GM12878 (cell line): ENCODE measurements at regions of chr6 and their contacts with region 1.

Region 1: GRCh38 chr6:30672445-30673253 is at the start of gene DHX16:
- DNase-seq: peak; percentile 90
- ATAC-seq: peak; percentile 90
- H3K4me3 ChIP-seq: peak within 1 kb of the TSS; percentile 99
- H3K27ac ChIP-seq: peak within 1 kb of the TSS; percentile 79
- H3K4me1 ChIP-seq: peaks cover 8% of the 10 kb centered on the region
- H3K27me3 ChIP-seq: no peaks in the 10 kb centered on the region
- CTCF ChIP-seq: peak; percentile 77 to 93 (median 88); a peak in 5 of 6 replicates
- EP300 ChIP-seq: no peak
- POLR2A ChIP-seq: peak; percentile 70
- RAD21 ChIP-seq: peak; percentile 64
- polyA plus RNA-seq, gene DHX16: 10.1 to 17.7 TPM

Region 2: DNA sequence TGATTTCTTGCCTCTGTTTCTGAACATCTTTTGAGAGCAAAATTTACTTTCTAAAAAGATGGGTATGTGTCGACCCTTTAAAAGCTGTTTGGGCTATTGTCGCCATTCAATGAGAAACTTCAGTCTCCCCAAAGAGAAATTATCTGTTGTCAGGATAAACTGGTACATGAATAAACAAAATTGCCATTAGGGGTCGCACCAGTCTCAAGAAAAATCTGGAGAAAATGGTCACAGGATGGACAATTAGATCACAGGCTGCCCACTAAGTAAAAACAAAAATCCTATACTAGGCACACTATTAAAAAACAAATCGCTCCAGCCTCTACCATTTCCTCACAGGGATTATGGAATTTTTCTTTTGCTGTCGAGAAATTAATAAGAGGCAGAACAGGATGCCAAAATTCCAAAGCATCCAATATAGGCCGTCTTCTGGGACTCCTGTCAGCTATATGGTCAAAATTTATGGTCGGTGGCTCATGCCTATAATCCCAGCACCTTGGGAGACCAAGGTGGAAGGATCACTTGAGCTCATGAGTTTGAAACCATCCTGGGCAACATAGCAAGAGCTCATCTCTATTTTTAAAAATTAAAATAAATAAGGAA is 188.9 kb before region 1 on chr6:
- CTCF ChIA-PET with region 1: interaction called, 17 read pairs
- POLR2A ChIA-PET with region 1: interaction called, 3 read pairs
- RAD21 ChIA-PET with region 1: interaction called, 7 read pairs
- SMC1A ChIA-PET with region 1: interaction called, 9 read pairs
- in situ Hi-C with region 1: loop called (anchors 5 kb)
- intact Hi-C with region 1: loop called (anchors 1 kb)
- DNase-seq: peak; percentile 37
- ATAC-seq: peak; percentile 48
- H3K4me3 ChIP-seq: no peak overlapping the region
- H3K27ac ChIP-seq: no peak overlapping the region
- H3K4me1 ChIP-seq: peaks cover 12% of the 10 kb centered on the region; the same call in 1 of the 2 replicates
- H3K27me3 ChIP-seq: peaks cover 2 to 8% of the 10 kb centered on the region in 2 experiments; a peak in 3 of 4 replicates
- CTCF ChIP-seq: peak; percentile 47 to 73 (median 56); a peak in 5 of 6 replicates
- EP300 ChIP-seq: no peak
- POLR2A ChIP-seq: no peak
- RAD21 ChIP-seq: peak; percentile 90

Region 3: GRCh38 chr6:30646458-30647241 is 26.0 kb before region 1 on chr6 and contains the start of gene C6orf136:
- CTCF ChIA-PET with region 1: interaction called, 6 read pairs
- POLR2A ChIA-PET with region 1: interaction called, 3 read pairs
- RAD21 ChIA-PET with region 1: no interaction called
- SMC1A ChIA-PET with region 1: interaction called, 3 read pairs
- in situ Hi-C with region 1: no loop called
- intact Hi-C with region 1: loop called (anchors 2 kb)
- DNase-seq: peak; percentile 75
- ATAC-seq: peak; percentile 88
- H3K4me3 ChIP-seq: peak within 1 kb of the TSS; percentile 77
- H3K27ac ChIP-seq: peak within 1 kb of the TSS; percentile 87
- H3K4me1 ChIP-seq: peaks cover 2% of the 10 kb centered on the region; the same call in 1 of the 2 replicates
- H3K27me3 ChIP-seq: no peaks in the 10 kb centered on the region
- CTCF ChIP-seq: no peak
- EP300 ChIP-seq: no peak
- POLR2A ChIP-seq: no peak
- RAD21 ChIP-seq: no peak
- polyA plus RNA-seq, gene C6orf136: 10.0 to 14.6 TPM

Region 4: DNA sequence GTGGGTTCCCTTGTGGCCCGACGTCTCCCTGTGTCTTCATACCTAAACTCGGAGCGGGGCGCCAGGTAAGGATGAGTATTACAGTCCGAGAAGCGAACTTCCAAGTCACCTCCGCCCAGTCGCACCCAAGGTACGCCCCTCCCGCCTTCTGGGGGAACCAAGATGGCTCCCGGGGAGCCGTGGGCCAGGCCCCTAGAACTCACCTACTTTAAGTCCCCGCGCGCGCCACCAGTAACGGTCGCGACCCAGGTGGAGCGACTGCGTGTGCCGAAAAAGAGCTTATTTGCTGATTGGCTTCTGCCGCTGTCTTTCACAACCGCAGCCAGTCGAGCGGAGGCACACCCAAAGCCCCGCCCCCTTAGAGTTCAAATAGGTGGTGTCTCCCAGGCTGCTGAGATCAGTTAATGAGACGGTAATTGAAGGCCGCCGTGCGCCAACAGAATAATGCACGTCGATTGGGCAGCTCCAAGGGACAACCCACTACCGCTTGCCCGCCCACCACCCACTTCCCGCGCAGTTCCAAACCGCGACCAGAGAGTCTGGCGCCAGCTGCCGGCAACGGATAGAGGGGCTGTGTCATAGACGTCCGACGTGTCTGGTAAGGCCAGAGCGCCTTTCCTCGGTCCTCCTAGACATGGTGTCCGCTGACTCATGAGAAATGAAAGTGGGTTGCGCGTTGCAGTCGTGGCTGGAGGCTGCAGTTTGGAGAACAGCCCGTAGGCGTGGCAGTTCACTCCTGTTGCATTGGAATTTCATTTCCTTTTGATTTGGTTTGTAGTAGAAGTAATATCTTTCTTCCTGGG is 44.6 kb after region 1 on chr6 and contains the start of gene MDC1:
- CTCF ChIA-PET with region 1: interaction called, 487 read pairs
- POLR2A ChIA-PET with region 1: interaction called, 200 read pairs
- RAD21 ChIA-PET with region 1: interaction called, 14 read pairs
- SMC1A ChIA-PET with region 1: interaction called, 265 read pairs
- in situ Hi-C with region 1: no loop called
- intact Hi-C with region 1: no loop called
- DNase-seq: peak; percentile 99
- ATAC-seq: peak; percentile 76
- H3K4me3 ChIP-seq: peak within 1 kb of the TSS; percentile 83
- H3K27ac ChIP-seq: peak within 1 kb of the TSS; percentile 98
- H3K4me1 ChIP-seq: peaks cover 16% of the 10 kb centered on the region
- H3K27me3 ChIP-seq: no peaks in the 10 kb centered on the region
- CTCF ChIP-seq: peak; percentile 8 to 29 (median 17); a peak in 3 of 6 replicates
- EP300 ChIP-seq: peak; percentile 39 to 52; a peak in 1 of 4 replicates
- POLR2A ChIP-seq: peak; percentile 80
- RAD21 ChIP-seq: no peak; the same call in 1 of the 2 replicates
- polyA plus RNA-seq, gene MDC1: 5.1 to 6.5 TPM

Region 5: GRCh38 chr6:30876039-30876730 is 203.5 kb after region 1 on chr6:
- CTCF ChIA-PET with region 1: no interaction called
- POLR2A ChIA-PET with region 1: no interaction called
- RAD21 ChIA-PET with region 1: no interaction called
- SMC1A ChIA-PET with region 1: no interaction called
- in situ Hi-C with region 1: no loop called
- intact Hi-C with region 1: no loop called
- DNase-seq: no peak
- ATAC-seq: no peak
- H3K4me3 ChIP-seq: no peak overlapping the region
- H3K27ac ChIP-seq: peak overlapping the region; percentile 14; the same call in 1 of the 2 replicates
- H3K4me1 ChIP-seq: peaks cover 15% of the 10 kb centered on the region
- H3K27me3 ChIP-seq: no peaks in the 10 kb centered on the region
- CTCF ChIP-seq: no peak
- EP300 ChIP-seq: no peak
- POLR2A ChIP-seq: no peak
- RAD21 ChIP-seq: no peak